Left lung (tissue), 14 donors: ENCODE measurements at regions of chrX and their contacts with region 1.

Region 1: GRCh38 chrX:35276115-35276514 is 333.5 kb downstream of the FAM47B start:
- DNase-seq: no peak
- ATAC-seq: no peak
- H3K4me3 ChIP-seq: no peak overlapping the region
- H3K27ac ChIP-seq: no peak overlapping the region
- H3K4me1 ChIP-seq: no peaks in the 10 kb centered on the region
- H3K27me3 ChIP-seq: no peaks in the 10 kb centered on the region
- CTCF ChIP-seq: no peak

Region 2: DNA sequence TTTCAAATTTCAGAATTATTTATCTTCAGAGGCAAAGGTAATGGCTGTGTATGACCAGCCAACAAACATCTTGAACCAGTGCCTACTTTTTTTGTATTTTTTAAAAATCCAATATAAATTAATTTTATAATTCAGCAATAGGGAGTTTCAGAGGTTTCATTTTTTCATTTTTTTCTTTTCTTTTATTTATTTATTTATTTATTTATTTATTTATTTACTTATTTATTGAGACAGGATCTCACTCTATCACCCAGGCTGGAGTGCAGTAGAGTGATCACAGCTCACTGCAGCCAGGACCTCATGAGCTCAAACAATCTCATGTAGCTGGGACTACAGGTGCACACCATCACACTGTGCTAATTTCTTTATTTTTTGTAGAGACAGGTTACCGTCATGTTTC is 869.5 kb before region 1 on chrX:
- intact Hi-C with region 1: no loop called
- DNase-seq: no peak
- ATAC-seq: no peak
- H3K4me3 ChIP-seq: no peak overlapping the region
- H3K27ac ChIP-seq: no peak overlapping the region
- H3K4me1 ChIP-seq: no peaks in the 10 kb centered on the region
- H3K27me3 ChIP-seq: no peaks in the 10 kb centered on the region
- CTCF ChIP-seq: no peak

Region 3: GRCh38 chrX:35244796-35245508 is 31.2 kb before region 1 on chrX:
- intact Hi-C with region 1: loop called in 1 of 2 experiments (anchors 5 kb)
- DNase-seq: no peak
- ATAC-seq: no peak
- H3K4me3 ChIP-seq: no peak overlapping the region
- H3K27ac ChIP-seq: no peak overlapping the region
- H3K4me1 ChIP-seq: no peaks in the 10 kb centered on the region
- H3K27me3 ChIP-seq: no peaks in the 10 kb centered on the region
- CTCF ChIP-seq: no peak

Region 4: DNA sequence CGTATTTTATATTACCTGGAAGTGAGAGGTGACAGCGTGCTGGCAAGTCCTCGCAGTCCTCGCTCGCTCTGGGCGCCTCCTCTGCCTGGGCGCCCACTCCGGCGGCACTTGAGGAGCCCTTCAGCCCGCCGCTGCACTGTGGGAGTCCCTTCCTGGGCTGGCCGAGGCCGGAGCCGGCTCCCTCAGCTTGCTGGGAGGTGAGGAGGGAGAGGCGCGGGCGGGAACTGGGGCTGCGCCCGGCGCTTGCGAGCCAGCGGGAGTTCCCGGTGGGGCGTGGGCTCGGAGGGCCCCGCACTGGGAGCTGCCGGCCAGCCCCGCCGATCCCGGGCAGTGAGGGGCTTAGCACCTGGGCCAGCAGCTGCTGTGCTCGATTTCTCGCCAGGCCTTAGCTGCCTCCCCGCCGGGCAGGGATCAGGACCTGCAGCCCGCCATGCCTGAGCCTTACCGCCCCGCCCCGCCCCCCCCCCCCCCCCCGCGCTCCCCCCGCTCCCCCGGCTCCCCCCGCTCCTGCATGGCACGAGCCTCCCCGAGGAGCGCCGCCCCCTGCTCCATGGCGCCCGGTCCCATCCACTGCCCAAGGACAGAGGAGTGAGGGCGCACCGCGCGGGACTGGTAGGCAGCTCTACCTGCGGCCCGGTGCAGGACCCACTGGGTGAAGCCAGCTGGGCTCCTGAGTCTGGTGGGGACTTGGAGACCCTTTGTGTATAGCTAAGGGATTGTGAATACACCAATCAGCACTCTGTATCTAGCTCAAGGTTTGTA is 223.1 kb after region 1 on chrX:
- intact Hi-C with region 1: no loop called
- DNase-seq: no peak
- ATAC-seq: no peak
- H3K4me3 ChIP-seq: no peak overlapping the region
- H3K27ac ChIP-seq: no peak overlapping the region
- H3K4me1 ChIP-seq: no peaks in the 10 kb centered on the region
- H3K27me3 ChIP-seq: no peaks in the 10 kb centered on the region
- CTCF ChIP-seq: no peak